Left ventricle myocardium inferior (tissue), 1 donor: ENCODE measurements at regions of chr7 and their contacts with region 1.

Region 1: DNA sequence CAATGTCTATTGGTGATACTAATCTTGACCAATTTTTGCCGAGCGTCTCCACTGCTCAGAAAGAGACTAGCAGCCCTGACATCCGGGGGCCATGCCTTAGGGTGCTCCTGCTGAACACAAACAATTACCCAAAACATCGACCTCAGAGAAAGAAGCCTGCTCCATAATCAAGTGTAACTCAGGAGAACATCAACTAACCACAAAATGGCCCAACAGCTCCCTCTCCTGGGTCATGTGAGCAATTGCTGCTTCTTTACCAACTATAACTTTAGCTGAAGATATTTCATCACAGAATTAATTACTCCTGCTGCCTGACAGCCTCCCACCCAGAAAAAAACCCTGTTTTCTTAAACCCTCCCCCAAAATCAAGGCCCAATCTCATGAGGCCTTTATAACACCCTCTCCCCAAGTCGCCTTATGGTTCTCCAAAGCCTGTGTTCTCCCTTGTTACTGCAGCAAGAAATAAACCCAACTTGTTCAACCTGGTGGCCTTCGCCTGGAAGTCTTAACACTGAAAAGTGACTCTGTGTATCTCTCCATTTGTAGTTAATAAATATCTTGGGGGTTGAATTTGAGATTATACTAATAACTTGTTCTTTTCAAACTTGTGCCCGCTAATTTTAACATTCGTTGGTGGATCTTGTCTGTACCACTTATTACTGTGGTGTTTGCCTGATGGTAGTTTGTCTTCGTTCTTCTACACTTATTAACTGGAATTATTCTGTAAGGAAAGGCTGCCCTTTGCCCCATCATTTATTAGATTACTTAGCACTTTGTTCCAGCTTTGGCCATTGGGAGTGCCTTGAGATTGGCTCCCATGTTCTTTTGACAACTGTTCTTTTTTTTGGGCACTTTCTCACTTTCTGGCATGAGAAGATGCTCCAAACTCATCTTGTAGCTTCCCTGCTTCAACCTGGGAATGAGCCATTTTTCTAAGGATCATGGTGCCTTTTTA is 21.2 kb upstream of the RAMP3 start:
- DNase-seq: no peak
- H3K4me3 ChIP-seq: no peak overlapping the region
- H3K27ac ChIP-seq: no peak overlapping the region
- H3K4me1 ChIP-seq: no peaks in the 10 kb centered on the region
- H3K27me3 ChIP-seq: peaks cover 23% of the 10 kb centered on the region
- CTCF ChIP-seq: peak; percentile 90

Region 2: GRCh38 chr7:44858161-44858560 is 278.2 kb before region 1 on chr7:
- intact Hi-C with region 1: loop called (anchors 10 kb)
- DNase-seq: no peak
- H3K4me3 ChIP-seq: no peak overlapping the region
- H3K27ac ChIP-seq: no peak overlapping the region
- H3K4me1 ChIP-seq: no peaks in the 10 kb centered on the region
- H3K27me3 ChIP-seq: no peaks in the 10 kb centered on the region
- CTCF ChIP-seq: no peak

Region 3: DNA sequence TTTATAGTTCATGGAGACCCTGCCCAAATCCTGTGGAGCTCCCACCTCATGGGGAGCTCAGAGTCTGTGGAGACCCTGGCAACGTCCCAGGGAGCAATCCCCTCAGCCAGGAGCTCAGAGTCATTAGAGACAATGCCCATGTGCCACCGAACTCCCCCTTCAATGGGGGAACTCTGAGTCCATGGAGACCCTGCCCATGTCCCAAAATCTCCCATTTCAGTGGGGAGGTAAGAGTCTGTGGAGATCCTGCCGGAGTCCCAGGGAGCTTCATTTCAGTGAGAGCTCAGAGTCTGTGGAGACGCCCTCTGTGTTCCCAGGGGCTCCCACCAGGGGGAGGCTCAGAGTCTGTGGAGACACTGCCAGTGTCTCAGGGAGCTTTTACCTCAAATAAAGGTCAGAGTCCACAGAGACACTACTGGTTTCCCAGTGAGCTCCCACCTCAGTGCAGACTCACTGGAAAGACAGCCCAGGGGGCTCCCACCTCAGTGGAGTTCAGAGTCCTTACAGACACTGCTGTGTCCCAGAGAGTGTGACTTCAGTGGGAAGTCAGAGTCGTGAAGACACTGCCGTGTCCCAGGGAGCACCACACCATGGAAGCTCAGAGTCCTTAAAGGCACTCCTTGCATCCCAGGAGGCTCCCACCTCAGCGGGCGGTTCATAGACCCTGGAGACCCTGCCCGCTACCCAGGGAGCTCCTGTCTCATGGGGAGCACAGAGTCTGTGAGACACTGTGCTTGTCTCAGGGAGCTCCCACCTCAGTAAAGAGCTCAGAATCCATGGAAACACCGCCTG is 162.6 kb before region 1 on chr7:
- intact Hi-C with region 1: loop called (anchors 5 kb)
- DNase-seq: peak; percentile 55
- H3K4me3 ChIP-seq: no peak overlapping the region
- H3K27ac ChIP-seq: no peak overlapping the region
- H3K4me1 ChIP-seq: peaks cover 14% of the 10 kb centered on the region
- H3K27me3 ChIP-seq: no peaks in the 10 kb centered on the region
- CTCF ChIP-seq: peak; percentile 78

Region 4: DNA sequence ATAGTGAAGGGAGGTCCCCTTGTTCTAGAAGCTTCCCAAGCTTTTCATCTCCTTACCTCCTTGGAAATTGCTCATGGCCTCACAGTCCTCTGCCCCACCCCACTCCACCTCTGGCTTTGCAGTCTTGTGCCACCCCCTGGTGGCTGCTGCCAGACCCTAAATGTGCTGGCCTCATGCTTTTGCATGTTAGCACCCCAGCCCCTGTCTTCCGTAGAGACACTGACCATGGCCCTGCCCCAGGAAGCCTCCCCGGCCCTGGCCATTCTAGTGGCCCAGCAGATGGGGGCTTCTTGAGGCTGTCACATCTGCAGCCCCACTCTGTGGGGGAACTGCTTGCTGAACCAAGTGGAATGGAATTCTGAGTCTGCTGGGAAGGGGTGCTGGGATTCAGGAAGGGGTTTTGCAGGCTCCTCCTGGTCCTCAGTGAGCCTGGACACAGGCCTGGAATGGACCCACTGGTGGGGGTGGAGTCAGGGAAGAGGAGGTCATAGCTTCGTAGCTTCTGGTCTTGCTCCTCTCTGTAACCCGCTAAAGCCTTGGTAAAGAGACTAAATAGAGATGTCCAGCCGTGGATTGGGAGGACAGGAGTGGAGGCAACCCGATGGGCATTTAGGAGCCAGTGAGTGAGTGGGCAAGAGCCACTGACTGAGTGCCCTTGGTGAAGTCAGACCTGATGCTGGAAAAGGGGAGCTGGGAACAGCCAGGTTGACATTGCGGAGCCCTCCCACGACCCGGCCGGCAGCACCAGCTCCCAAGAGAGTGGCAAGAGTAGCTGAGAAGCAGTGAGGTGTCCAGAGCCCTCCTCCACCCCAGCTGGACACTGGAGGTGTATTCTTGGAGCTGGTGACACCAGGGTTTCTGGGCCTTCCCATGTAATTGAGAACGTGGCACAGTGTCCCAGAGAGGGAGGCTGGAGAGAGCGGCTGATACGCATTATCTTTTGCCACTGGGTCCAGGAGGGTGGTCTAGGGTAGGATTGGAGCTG is 42.1 kb after region 1 on chr7:
- intact Hi-C with region 1: no loop called
- DNase-seq: no peak
- H3K4me3 ChIP-seq: no peak overlapping the region
- H3K27ac ChIP-seq: no peak overlapping the region
- H3K4me1 ChIP-seq: peaks cover 34% of the 10 kb centered on the region
- H3K27me3 ChIP-seq: no peaks in the 10 kb centered on the region
- CTCF ChIP-seq: no peak

Region 5: DNA sequence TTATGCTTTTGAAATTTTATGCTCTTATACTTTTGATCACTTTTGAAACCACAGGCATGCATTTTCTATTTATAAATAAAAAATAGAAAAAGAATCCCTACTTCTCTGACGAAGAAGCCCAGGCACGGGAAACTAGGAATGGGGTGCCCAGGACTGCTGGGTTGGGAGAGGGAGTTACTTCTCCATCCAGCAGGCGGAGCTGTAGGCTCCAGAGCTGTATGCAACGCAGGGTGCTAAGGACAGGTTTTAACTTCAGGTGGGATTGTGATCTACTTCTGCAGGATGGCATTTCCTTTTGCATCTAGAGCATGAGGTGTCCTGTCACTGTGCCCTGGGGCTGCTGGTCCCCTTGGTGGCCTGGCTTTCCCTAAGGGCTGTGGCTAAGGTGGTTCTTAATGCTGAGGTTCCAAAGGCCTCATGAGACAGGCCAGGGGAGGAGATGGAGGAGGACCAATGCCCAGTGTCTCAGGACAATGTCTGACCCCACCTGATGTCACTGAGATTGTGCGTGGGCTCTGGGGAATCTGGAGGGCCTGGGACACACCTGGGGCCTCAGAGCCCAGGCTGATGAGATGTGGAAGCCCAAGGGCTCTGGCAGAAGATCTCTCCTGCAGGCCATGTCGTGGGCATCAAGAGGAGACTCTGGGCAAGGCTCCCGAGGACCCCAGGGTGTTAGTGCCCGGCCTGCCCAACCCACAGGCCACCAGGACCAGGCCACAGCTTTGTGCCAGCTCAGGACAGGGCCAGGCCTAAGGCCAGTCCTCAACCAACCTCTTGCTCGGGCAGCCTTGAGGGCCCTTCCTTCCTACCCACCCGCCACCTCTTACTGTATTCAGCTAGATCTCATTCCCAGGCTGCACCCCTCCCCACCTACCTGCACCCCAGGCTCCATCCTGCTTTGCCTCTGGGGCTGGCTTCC is 736.0 kb after region 1 on chr7:
- intact Hi-C with region 1: no loop called
- DNase-seq: no peak
- H3K4me3 ChIP-seq: no peak overlapping the region
- H3K27ac ChIP-seq: no peak overlapping the region
- H3K4me1 ChIP-seq: no peaks in the 10 kb centered on the region
- H3K27me3 ChIP-seq: peaks cover 8% of the 10 kb centered on the region
- CTCF ChIP-seq: peak; percentile 51